Heart right ventricle (tissue), 16 donors: ENCODE measurements at regions of chr18 and their contacts with region 1.

Region 1: GRCh38 chr18:39667905-39668304 is 2102.3 kb upstream of the CELF4 start:
- DNase-seq: no peak
- ATAC-seq: no peak
- H3K4me3 ChIP-seq: no peak overlapping the region
- H3K27ac ChIP-seq: no peak overlapping the region
- H3K4me1 ChIP-seq: no peaks in the 10 kb centered on the region
- H3K27me3 ChIP-seq: no peaks in the 10 kb centered on the region
- CTCF ChIP-seq: no peak

Region 2: GRCh38 chr18:39624934-39625333 is 43.0 kb before region 1 on chr18:
- intact Hi-C with region 1: loop called in 1 of 10 experiments (anchors 1 kb)
- DNase-seq: no peak
- ATAC-seq: no peak
- H3K4me3 ChIP-seq: no peak overlapping the region
- H3K27ac ChIP-seq: no peak overlapping the region
- H3K4me1 ChIP-seq: no peaks in the 10 kb centered on the region
- H3K27me3 ChIP-seq: no peaks in the 10 kb centered on the region
- CTCF ChIP-seq: no peak